ENCODE measurements at regions of chr3 and their contacts with region 1.

Region 1: DNA sequence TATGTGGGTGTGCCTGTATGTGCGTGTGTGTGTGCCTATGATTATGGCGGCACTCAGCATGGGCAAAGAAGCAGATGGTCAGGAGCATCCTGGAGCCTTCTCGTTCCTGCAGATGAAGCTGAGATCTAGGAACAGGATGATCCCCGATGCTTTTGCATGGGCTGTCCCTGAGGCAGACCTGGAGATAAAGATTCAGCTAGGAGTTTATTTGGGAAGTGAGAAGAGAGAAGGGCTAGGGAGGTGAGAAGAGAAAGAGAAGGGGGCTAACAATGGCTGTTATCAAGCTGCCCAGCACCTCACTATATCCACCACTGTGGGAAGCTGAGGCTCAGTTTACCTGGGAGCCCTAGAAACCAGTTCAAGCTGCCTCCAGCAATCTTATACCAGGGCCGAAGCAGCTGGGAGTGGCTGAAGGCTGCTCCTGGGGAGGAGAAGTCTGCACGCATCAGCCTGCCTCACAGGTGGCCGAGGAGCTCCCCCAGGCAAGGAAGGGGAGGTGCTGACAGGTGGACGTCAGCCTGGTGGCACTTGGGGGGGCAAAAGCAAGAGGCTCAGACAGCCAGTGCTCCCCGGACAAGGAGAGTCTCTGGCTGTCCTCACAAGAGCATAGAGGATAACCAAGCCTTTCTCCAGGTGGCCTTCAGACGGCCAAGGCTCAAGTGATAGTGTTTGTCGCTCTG is 94.0 kb upstream of the IQSEC1 start:
- DNase-seq: no peak
- ATAC-seq: no peak
- H3K4me3 ChIP-seq: no peak overlapping the region
- H3K27ac ChIP-seq: no peak overlapping the region
- H3K4me1 ChIP-seq: no peaks in the 10 kb centered on the region
- H3K27me3 ChIP-seq: no peaks in the 10 kb centered on the region
- CTCF ChIP-seq: no peak

Region 2: GRCh38 chr3:13191016-13191415 is 23.8 kb after region 1 on chr3:
- CTCF ChIA-PET with region 1: interaction called, 18 read pairs
- POLR2A ChIA-PET with region 1: interaction called, 3 read pairs
- in situ Hi-C with region 1: no loop called
- intact Hi-C with region 1: no loop called
- DNase-seq: no peak
- ATAC-seq: no peak
- H3K4me3 ChIP-seq: no peak overlapping the region
- H3K27ac ChIP-seq: no peak overlapping the region
- H3K4me1 ChIP-seq: peaks cover 24% of the 10 kb centered on the region
- H3K27me3 ChIP-seq: no peaks in the 10 kb centered on the region
- CTCF ChIP-seq: no peak